GM12878 (cell line): ENCODE measurements at regions of chr17 and their contacts with region 1.

Region 1: DNA sequence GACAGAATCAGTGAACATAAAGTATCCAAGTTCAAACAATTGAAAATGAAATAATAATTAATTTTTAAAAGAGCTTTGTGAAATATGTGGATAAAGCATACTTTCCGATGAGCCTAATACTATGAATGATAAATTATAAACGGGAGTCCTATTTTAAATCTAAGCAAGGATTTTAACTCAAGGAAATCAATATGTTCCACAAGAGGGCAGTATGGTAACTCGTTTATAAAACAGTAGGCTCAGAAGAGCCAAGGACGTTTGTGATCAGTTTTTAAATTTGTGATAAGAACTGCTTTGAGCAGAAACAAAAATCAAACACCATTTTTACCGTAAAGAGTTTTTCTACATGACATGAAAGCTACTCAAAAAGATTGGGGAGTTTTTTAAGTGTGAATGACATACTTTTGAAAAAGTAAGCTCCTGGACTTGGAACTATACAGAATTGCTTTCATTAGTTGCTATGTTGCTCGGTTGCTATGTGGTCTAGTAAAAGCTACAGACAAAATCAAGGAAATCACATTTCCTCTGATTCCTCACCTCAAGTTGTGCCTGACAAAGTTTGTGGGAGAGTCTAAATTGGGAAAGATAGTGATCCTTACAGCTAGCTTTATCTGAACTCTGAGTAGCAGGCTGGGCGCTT is 11.8 kb upstream of the TEKT1 start:
- DNase-seq: no peak
- ATAC-seq: peak; percentile 59; the same call in 2 of the 3 replicates
- H3K4me3 ChIP-seq: no peak overlapping the region
- H3K27ac ChIP-seq: no peak overlapping the region
- H3K4me1 ChIP-seq: no peaks in the 10 kb centered on the region
- H3K27me3 ChIP-seq: no peaks in the 10 kb centered on the region
- CTCF ChIP-seq: peak; percentile 16 to 52 (median 34); a peak in 4 of 6 replicates
- EP300 ChIP-seq: no peak
- POLR2A ChIP-seq: no peak
- RAD21 ChIP-seq: peak; percentile 45

Region 2: GRCh38 chr17:6366221-6366666 is 477.1 kb before region 1 on chr17:
- CTCF ChIA-PET with region 1: no interaction called
- POLR2A ChIA-PET with region 1: no interaction called
- RAD21 ChIA-PET with region 1: no interaction called
- SMC1A ChIA-PET with region 1: no interaction called
- in situ Hi-C with region 1: no loop called
- intact Hi-C with region 1: no loop called
- DNase-seq: no peak
- ATAC-seq: no peak
- H3K4me3 ChIP-seq: no peak overlapping the region
- H3K27ac ChIP-seq: no peak overlapping the region
- H3K4me1 ChIP-seq: no peaks in the 10 kb centered on the region
- H3K27me3 ChIP-seq: no peaks in the 10 kb centered on the region
- CTCF ChIP-seq: no peak
- EP300 ChIP-seq: no peak
- POLR2A ChIP-seq: no peak
- RAD21 ChIP-seq: no peak

Region 3: DNA sequence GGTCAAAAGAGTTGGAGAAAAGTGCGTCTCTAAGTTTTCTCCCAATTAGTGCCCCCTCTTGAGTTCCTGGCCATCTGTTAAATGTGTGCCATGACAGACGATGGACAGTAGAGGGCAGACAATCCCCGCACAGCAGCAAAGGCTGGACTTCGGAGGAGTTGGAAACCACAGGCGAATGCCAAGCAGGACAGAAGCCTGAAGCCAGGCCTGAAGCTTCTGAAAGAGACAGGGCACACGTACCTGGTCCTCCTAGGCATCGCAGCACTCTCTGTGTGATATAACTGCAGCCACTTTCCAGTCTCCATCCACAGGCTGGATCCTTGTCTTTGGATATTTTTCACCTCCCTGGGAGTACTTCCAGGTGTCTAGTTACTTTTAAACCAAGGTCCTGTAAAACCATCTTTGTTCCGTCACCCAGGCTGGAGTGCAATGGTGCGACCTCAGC is 177.3 kb before region 1 on chr17:
- CTCF ChIA-PET with region 1: interaction called, 27 read pairs
- POLR2A ChIA-PET with region 1: interaction called, 4 read pairs
- RAD21 ChIA-PET with region 1: interaction called, 9 read pairs
- SMC1A ChIA-PET with region 1: interaction called, 16 read pairs
- in situ Hi-C with region 1: no loop called
- intact Hi-C with region 1: loop called (anchors 2 kb)
- DNase-seq: no peak
- ATAC-seq: peak; percentile 96
- H3K4me3 ChIP-seq: no peak overlapping the region
- H3K27ac ChIP-seq: no peak overlapping the region
- H3K4me1 ChIP-seq: peaks cover 4% of the 10 kb centered on the region
- H3K27me3 ChIP-seq: no peaks in the 10 kb centered on the region
- CTCF ChIP-seq: peak; percentile 86 to 96 (median 92)
- EP300 ChIP-seq: no peak
- POLR2A ChIP-seq: no peak
- RAD21 ChIP-seq: peak; percentile 98

Region 4: DNA sequence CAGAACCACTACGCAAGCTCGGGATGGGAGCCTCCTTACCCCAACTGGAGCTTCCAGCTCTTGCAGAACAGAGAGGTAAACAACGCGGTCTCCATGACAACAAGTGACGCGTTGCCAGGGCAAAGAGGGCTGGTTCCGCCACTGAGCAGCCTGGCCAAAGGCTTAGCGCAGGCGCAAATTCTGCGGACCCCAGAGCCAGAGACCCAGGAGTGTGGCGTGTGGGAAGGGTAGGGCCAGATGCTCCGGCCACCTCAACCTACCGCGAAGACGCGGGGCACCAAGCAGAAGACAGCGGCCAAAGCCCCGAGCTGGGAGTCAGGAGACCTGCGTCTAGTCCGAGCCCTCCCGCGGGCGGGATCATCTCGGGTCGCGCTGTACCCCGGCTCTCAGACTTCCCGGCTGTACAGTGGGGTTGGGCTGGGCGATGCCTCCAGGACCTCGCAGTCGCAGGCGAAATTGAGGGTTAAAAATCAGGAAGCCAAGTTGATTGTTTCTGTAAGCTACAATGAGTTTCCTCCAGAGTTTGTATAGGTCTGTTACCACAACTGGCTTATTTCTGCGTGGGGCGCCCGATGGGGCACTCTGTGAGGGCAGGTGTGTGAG is 11.6 kb before region 1 on chr17 and contains the start of gene TEKT1:
- CTCF ChIA-PET with region 1: interaction called, 23 read pairs
- POLR2A ChIA-PET with region 1: no interaction called
- RAD21 ChIA-PET with region 1: no interaction called
- SMC1A ChIA-PET with region 1: interaction called, 9 read pairs
- in situ Hi-C with region 1: no loop called
- intact Hi-C with region 1: no loop called
- DNase-seq: no peak
- ATAC-seq: peak; percentile 83
- H3K4me3 ChIP-seq: no peak within 1 kb of the TSS
- H3K27ac ChIP-seq: no peak within 1 kb of the TSS
- H3K4me1 ChIP-seq: no peaks in the 10 kb centered on the region
- H3K27me3 ChIP-seq: peaks cover 7 to 12% of the 10 kb centered on the region in 2 experiments
- CTCF ChIP-seq: no peak
- EP300 ChIP-seq: no peak
- POLR2A ChIP-seq: no peak
- RAD21 ChIP-seq: no peak
- polyA plus RNA-seq, gene TEKT1: not detected

Region 5: GRCh38 chr17:6853764-6854442 is 10.5 kb after region 1 on chr17:
- CTCF ChIA-PET with region 1: interaction called, 35 read pairs
- POLR2A ChIA-PET with region 1: no interaction called
- RAD21 ChIA-PET with region 1: interaction called, 13 read pairs
- SMC1A ChIA-PET with region 1: interaction called, 23 read pairs
- in situ Hi-C with region 1: no loop called
- intact Hi-C with region 1: no loop called
- DNase-seq: no peak
- ATAC-seq: peak; percentile 83
- H3K4me3 ChIP-seq: peak overlapping the region; percentile 48; the same call in 1 of the 2 replicates
- H3K27ac ChIP-seq: 0 out of 2 replicates have a peak overlapping the region, but pooled peaks have one; percentile 19
- H3K4me1 ChIP-seq: no peaks in the 10 kb centered on the region
- H3K27me3 ChIP-seq: no peaks in the 10 kb centered on the region
- CTCF ChIP-seq: peak; percentile 14 to 36 (median 14); a peak in 2 of 6 replicates
- EP300 ChIP-seq: no peak
- POLR2A ChIP-seq: no peak
- RAD21 ChIP-seq: no peak

Region 6: DNA sequence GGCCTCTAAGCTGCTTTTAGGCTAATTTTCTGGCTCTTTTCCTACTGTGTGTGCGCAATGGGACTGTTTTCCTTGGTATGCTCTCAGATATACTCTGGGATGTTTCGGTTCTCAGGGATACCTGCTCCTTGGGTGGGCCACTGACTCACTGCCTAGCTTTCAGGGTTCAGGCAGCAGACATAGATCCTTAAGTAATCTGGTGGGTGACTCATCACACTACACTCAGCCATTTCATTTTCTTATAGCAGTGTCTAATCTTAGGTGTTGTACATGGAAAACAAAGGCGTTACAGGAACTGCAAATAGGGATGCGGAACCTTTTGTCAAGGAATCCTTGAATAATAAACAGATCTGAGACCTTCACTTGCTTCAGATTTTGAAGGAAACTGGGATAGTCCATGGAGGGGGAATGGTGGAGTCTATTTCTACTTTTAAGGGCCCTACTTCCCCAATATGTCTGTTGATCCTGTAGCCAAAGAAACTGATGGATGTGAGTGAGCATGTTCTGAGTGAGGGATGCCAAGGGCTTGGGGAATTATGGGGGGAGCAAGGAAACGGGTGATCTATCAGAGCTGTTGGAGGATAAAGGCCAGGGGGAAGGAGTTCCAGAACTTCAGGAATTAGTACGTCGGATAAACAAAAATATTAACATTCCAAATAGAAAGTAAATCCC is 28.9 kb after region 1 on chr17:
- CTCF ChIA-PET with region 1: interaction called, 17 read pairs
- POLR2A ChIA-PET with region 1: no interaction called
- RAD21 ChIA-PET with region 1: interaction called, 5 read pairs
- SMC1A ChIA-PET with region 1: interaction called, 3 read pairs
- in situ Hi-C with region 1: no loop called
- intact Hi-C with region 1: no loop called
- DNase-seq: no peak
- ATAC-seq: no peak
- H3K4me3 ChIP-seq: no peak overlapping the region
- H3K27ac ChIP-seq: no peak overlapping the region
- H3K4me1 ChIP-seq: no peaks in the 10 kb centered on the region
- H3K27me3 ChIP-seq: no peaks in the 10 kb centered on the region
- CTCF ChIP-seq: no peak
- EP300 ChIP-seq: no peak
- POLR2A ChIP-seq: no peak
- RAD21 ChIP-seq: no peak

Region 7: GRCh38 chr17:6894206-6894528 is 50.8 kb after region 1 on chr17:
- CTCF ChIA-PET with region 1: interaction called, 65 read pairs
- POLR2A ChIA-PET with region 1: no interaction called
- RAD21 ChIA-PET with region 1: interaction called, 5 read pairs
- SMC1A ChIA-PET with region 1: interaction called, 31 read pairs
- in situ Hi-C with region 1: no loop called
- intact Hi-C with region 1: no loop called
- DNase-seq: no peak
- ATAC-seq: no peak
- H3K4me3 ChIP-seq: no peak overlapping the region
- H3K27ac ChIP-seq: no peak overlapping the region
- H3K4me1 ChIP-seq: no peaks in the 10 kb centered on the region
- H3K27me3 ChIP-seq: no peaks in the 10 kb centered on the region
- CTCF ChIP-seq: peak; percentile 28 to 52 (median 32); a peak in 5 of 6 replicates
- EP300 ChIP-seq: no peak
- POLR2A ChIP-seq: no peak
- RAD21 ChIP-seq: 0 out of 2 replicates have a peak, but pooled peaks have one; percentile 26

Region 8: GRCh38 chr17:7021993-7022778 is 178.8 kb after region 1 on chr17:
- CTCF ChIA-PET with region 1: interaction called, 26 read pairs
- POLR2A ChIA-PET with region 1: interaction called, 4 read pairs
- RAD21 ChIA-PET with region 1: interaction called, 23 read pairs
- SMC1A ChIA-PET with region 1: interaction called, 12 read pairs
- in situ Hi-C with region 1: no loop called
- intact Hi-C with region 1: no loop called
- DNase-seq: no peak
- ATAC-seq: peak; percentile 86
- H3K4me3 ChIP-seq: peak overlapping the region; percentile 40; the same call in 1 of the 2 replicates
- H3K27ac ChIP-seq: peak overlapping the region; percentile 18; the same call in 1 of the 2 replicates
- H3K4me1 ChIP-seq: peaks cover 25% of the 10 kb centered on the region
- H3K27me3 ChIP-seq: no peaks in the 10 kb centered on the region
- CTCF ChIP-seq: peak; percentile 93 to 96 (median 96)
- EP300 ChIP-seq: no peak
- POLR2A ChIP-seq: peak; percentile 31; the same call in 1 of the 2 replicates
- RAD21 ChIP-seq: peak; percentile 72

Region 9: GRCh38 chr17:7060165-7060891 is 217.0 kb after region 1 on chr17:
- CTCF ChIA-PET with region 1: no interaction called
- POLR2A ChIA-PET with region 1: no interaction called
- RAD21 ChIA-PET with region 1: no interaction called
- SMC1A ChIA-PET with region 1: no interaction called
- in situ Hi-C with region 1: no loop called
- intact Hi-C with region 1: no loop called
- DNase-seq: no peak
- ATAC-seq: peak; percentile 81
- H3K4me3 ChIP-seq: no peak overlapping the region
- H3K27ac ChIP-seq: no peak overlapping the region
- H3K4me1 ChIP-seq: no peaks in the 10 kb centered on the region
- H3K27me3 ChIP-seq: no peaks in the 10 kb centered on the region
- CTCF ChIP-seq: no peak
- EP300 ChIP-seq: no peak
- POLR2A ChIP-seq: no peak
- RAD21 ChIP-seq: no peak